ENCODE measurements at regions of chr5 and their contacts with region 1.

Region 1: DNA sequence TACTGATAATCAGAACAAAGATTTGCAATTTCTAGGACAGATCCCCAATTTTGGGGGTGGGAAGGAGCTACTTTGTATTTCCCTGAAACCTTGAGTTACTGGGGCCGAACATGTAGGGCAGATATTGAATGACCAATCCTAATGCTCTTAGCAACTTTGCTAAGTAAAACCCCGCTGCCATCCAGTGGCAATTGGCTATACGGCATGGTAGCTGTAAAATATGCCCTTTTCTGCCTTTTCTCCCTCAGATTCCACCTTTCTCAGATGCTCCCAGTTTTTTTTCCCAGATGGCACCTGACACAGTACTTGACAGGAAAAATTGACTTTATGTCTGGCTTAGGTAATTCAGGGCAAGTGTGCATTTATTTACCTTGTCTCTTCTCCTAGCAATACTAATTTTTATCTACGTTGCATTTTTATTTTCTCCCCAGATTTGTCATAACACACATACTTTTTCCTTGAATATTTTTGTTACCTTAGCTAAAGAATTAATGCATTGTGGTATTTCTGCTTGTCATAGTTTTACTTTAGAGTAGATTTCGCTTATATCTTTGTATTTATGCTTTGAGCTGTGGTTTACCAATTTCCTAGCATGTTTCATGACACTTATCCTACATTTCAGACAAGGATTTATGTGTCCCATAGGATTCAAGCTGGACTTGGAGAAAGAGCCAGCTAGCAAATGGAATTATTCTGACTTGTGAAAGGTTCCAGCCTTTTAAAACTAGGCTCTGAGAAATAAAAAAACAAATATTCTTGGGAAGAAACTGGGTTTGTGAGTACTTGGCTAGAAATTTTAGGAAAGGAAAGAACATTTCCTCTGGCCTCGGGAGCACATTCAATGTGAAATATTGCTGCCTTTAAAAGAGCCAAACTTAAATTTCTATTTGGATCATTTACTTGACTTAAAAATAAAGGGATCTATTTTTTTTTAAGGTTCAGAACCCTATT is 37.4 kb downstream of the PIK3R1 start:
- DNase-seq: peak; percentile 33
- H3K4me3 ChIP-seq: peak overlapping the region; percentile 39
- H3K27ac ChIP-seq: peak overlapping the region; percentile 91
- H3K4me1 ChIP-seq: peaks cover 100% of the 10 kb centered on the region
- H3K27me3 ChIP-seq: no peaks in the 10 kb centered on the region
- CTCF ChIP-seq: peak; percentile 81

Region 2: DNA sequence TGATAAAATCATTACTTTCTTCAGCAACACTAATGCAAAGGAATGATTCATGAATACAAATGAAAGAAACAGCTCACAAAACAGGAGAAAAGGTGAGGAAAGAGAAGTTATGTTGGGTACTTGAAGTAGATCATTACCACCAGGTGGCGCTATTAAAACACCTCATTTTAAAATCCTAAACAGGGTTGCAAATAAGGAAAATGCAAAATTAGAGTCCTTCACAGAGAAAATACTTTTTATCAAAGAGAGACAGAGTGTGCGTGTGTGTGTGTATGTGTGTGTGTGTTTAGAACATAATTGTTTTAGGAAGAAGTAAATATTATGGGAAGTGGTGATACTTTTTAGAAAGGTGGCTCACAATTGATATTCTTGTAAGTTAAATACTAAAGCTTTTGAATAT is 1006.8 kb before region 1 on chr5:
- intact Hi-C with region 1: loop called (anchors 10 kb)
- DNase-seq: no peak
- H3K4me3 ChIP-seq: no peak overlapping the region
- H3K27ac ChIP-seq: peak overlapping the region; percentile 43
- H3K4me1 ChIP-seq: peaks cover 43% of the 10 kb centered on the region
- H3K27me3 ChIP-seq: no peaks in the 10 kb centered on the region
- CTCF ChIP-seq: peak; percentile 78

Region 3: GRCh38 chr5:67921004-67921601 is 331.8 kb before region 1 on chr5:
- intact Hi-C with region 1: no loop called
- DNase-seq: no peak
- H3K4me3 ChIP-seq: no peak overlapping the region
- H3K27ac ChIP-seq: no peak overlapping the region
- H3K4me1 ChIP-seq: no peaks in the 10 kb centered on the region
- H3K27me3 ChIP-seq: no peaks in the 10 kb centered on the region
- CTCF ChIP-seq: no peak